GM23248 (cell line): ENCODE measurements at regions of chr12 and their contacts with region 1.

Region 1: GRCh38 chr12:76348079-76348901 is at the start of gene BBS10:
- DNase-seq: peak; percentile 97
- H3K4me3 ChIP-seq: peak within 1 kb of the TSS; percentile 95
- H3K27ac ChIP-seq: peak within 1 kb of the TSS; percentile 74
- H3K4me1 ChIP-seq: peaks cover 22% of the 10 kb centered on the region
- H3K27me3 ChIP-seq: no peaks in the 10 kb centered on the region
- total RNA-seq, gene BBS10: 13.9 and 15.8 TPM in 2 replicates

Region 2: DNA sequence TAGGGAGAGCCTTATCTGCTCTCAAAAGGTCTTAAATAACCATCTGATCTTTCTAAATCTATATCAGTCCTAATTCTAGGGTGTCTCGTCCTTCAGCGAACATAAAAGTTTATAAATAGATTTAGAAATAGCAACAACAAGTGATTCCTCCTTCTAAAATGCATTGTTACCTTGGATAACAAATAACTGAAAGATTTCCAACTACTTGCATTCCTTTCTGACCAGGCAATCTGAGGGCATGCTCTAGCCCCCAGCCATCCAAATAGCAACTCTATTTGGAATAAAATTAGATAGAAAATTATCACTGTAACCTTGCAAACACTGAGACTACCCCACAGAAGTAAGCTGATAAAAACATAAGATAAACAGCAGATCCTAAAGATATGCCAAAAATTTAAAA is 815.1 kb before region 1 on chr12:
- in situ Hi-C with region 1: loop called (anchors 10 kb)
- DNase-seq: no peak
- H3K4me3 ChIP-seq: no peak overlapping the region
- H3K27ac ChIP-seq: no peak overlapping the region
- H3K4me1 ChIP-seq: no peaks in the 10 kb centered on the region
- H3K27me3 ChIP-seq: no peaks in the 10 kb centered on the region

Region 3: DNA sequence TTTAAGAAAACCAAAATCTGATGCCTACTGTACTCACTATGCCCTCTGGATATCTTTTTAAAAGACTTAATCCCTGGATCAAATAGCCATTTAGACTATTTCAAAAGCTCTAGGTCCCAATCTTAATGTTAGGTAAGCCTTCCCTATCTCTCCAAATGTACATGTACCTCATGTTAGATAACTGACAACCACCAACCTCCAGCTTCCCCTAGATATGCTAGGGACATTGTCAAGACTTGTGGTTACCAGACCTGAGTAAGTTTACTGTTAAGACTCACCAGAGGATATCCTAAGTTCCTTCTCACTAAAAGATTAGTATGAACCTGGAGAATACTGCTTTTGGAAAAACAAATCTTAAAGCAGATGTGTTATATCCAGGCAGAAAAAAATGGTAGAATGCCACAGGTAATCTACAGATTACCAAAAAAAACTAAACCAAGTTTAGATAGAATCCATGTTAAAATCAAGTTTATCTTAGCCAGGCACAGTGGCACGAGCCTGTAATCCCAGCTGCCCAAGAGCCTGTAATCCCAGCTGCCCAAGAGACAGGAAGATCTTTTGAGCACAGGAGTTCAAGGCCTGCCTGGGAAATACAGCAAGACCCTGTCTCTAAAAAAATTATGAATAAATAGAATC is 273.5 kb before region 1 on chr12:
- in situ Hi-C with region 1: loop called (anchors 10 kb)
- DNase-seq: no peak
- H3K4me3 ChIP-seq: no peak overlapping the region
- H3K27ac ChIP-seq: no peak overlapping the region
- H3K4me1 ChIP-seq: peaks cover 6% of the 10 kb centered on the region; the same call in 1 of the 2 replicates
- H3K27me3 ChIP-seq: no peaks in the 10 kb centered on the region